Esophagus squamous epithelium (tissue), 5 donors: ENCODE measurements at regions of chr11 and their contacts with region 1.

Region 1: GRCh38 chr11:32861850-32862577 is 30.6 kb upstream of the QSER1 start:
- DNase-seq: no peak
- H3K4me3 ChIP-seq: no peak overlapping the region
- H3K27ac ChIP-seq: no peak overlapping the region
- H3K4me1 ChIP-seq: no peaks in the 10 kb centered on the region
- H3K27me3 ChIP-seq: peaks cover 0 to 3% (median 0%) of the 10 kb centered on the region in 4 donors
- CTCF ChIP-seq: no peak
- POLR2A ChIP-seq: no peak

Region 2: GRCh38 chr11:32817181-32817851 is 44.7 kb before region 1 on chr11:
- intact Hi-C with region 1: loop called (anchors 10 kb)
- DNase-seq: no peak
- H3K4me3 ChIP-seq: no peak overlapping the region
- H3K27ac ChIP-seq: peak overlapping the region in 2 of 4 donors; percentile 25 to 42
- H3K4me1 ChIP-seq: peaks cover 3 to 30% (median 4%) of the 10 kb centered on the region in 3 donors
- H3K27me3 ChIP-seq: no peaks in the 10 kb centered on the region
- CTCF ChIP-seq: no peak
- POLR2A ChIP-seq: no peak